ENCODE measurements at regions of chr14 and their contacts with region 1.

Region 1: GRCh38 chr14:23006544-23007419 is 3.2 kb downstream of the C14orf93 start:
- DNase-seq: peak; percentile 89 to 92
- H3K4me3 ChIP-seq: peak overlapping the region; percentile 73 to 85 (median 76)
- H3K27ac ChIP-seq: peak overlapping the region; percentile 89
- H3K4me1 ChIP-seq: peaks cover 4 to 7% (median 6%) of the 10 kb centered on the region in 4 experiments; a peak in 4 of 7 replicates
- H3K27me3 ChIP-seq: no peaks in the 10 kb centered on the region
- CTCF ChIP-seq: peak in 1 of 3 experiments; percentile 27; a peak in 2 of 4 replicates
- EP300 ChIP-seq: no peak
- POLR2A ChIP-seq: peak; percentile 74 to 99
- RAD21 ChIP-seq: no peak

Region 2: DNA sequence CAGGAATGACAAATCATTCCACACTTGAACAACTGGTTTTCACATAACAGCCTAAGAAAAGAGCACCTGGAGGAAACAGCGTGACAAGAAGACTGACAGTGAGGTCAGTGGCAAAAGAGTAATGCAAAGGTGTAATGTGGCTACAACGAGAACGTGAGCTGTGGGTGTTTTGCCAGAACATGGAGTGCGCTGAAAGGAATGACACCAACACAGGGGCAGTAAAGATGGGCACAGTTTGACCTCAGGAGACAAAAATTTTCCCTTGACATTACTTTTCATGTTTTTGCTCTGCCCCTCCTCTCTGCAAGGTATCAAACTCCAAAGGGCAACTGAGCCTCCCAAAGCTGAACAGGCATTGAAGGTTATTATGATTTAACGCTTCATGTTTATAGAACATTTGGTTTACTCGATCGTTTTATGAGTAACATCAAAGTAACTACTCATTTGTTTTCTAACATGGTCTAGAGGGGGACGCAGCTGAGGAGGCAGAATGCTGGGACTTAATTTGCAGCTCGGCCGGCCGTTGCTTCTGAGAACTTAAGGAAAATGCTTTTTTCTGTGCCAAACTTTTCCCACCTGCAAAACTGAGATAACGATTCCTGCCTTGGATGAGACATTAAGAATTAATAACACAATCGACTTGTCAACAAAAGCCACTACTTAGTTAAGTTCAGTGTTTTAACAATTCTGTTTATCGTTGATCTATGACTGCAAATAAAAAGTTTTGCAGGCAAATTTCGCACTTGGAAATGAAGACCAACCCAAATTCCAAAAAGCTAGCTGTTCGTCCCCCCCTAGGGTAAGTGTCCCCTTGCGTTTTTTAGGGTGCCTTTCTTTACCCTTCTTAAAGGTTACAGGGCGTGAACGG is 50.8 kb before region 1 on chr14:
- CTCF ChIA-PET with region 1: interaction called, 6 read pairs
- POLR2A ChIA-PET with region 1: interaction called, 12 read pairs
- DNase-seq: no peak
- H3K4me3 ChIP-seq: peak overlapping the region; percentile 71 to 88 (median 84)
- H3K27ac ChIP-seq: 0 out of 2 replicates have a peak overlapping the region, but pooled peaks have one; percentile 89
- H3K4me1 ChIP-seq: peaks cover 2 to 4% (median 2%) of the 10 kb centered on the region in 4 experiments; a peak in 5 of 7 replicates
- H3K27me3 ChIP-seq: no peaks in the 10 kb centered on the region
- CTCF ChIP-seq: no peak
- EP300 ChIP-seq: no peak
- POLR2A ChIP-seq: no peak
- RAD21 ChIP-seq: no peak

Region 3: GRCh38 chr14:22973217-22974032 is 33.4 kb before region 1 on chr14:
- CTCF ChIA-PET with region 1: interaction called, 18 read pairs
- POLR2A ChIA-PET with region 1: interaction called, 133 read pairs
- DNase-seq: peak in 1 of 2 experiments; percentile 66
- H3K4me3 ChIP-seq: no peak overlapping the region
- H3K27ac ChIP-seq: no peak overlapping the region
- H3K4me1 ChIP-seq: peaks cover 13 to 20% (median 18%) of the 10 kb centered on the region in 4 experiments
- H3K27me3 ChIP-seq: no peaks in the 10 kb centered on the region
- CTCF ChIP-seq: peak in 2 of 3 experiments; percentile 75 to 76; a peak in 3 of 4 replicates
- EP300 ChIP-seq: no peak
- POLR2A ChIP-seq: no peak; a peak in 1 of 3 replicates
- RAD21 ChIP-seq: peak; percentile 84 to 88

Region 4: GRCh38 chr14:23025151-23025814 is 18.5 kb after region 1 on chr14:
- CTCF ChIA-PET with region 1: interaction called, 22 read pairs
- POLR2A ChIA-PET with region 1: interaction called, 99 read pairs
- DNase-seq: no peak
- H3K4me3 ChIP-seq: no peak overlapping the region
- H3K27ac ChIP-seq: no peak overlapping the region
- H3K4me1 ChIP-seq: peaks cover 0 to 3% (median under 1%) of the 10 kb centered on the region in 4 experiments; a peak in 1 of 7 replicates
- H3K27me3 ChIP-seq: no peaks in the 10 kb centered on the region
- CTCF ChIP-seq: no peak
- EP300 ChIP-seq: no peak
- POLR2A ChIP-seq: no peak
- RAD21 ChIP-seq: no peak

Region 5: GRCh38 chr14:23034483-23035302 is 27.9 kb after region 1 on chr14 and contains the start of gene PSMB5:
- CTCF ChIA-PET with region 1: interaction called, 785 read pairs
- POLR2A ChIA-PET with region 1: interaction called, 11 read pairs
- DNase-seq: peak; percentile 80 to 89
- H3K4me3 ChIP-seq: peak within 1 kb of the TSS; percentile 79 to 95 (median 88)
- H3K27ac ChIP-seq: peak within 1 kb of the TSS; percentile 98
- H3K4me1 ChIP-seq: peaks cover 0 to 3% (median 1%) of the 10 kb centered on the region in 4 experiments; a peak in 2 of 7 replicates
- H3K27me3 ChIP-seq: no peaks in the 10 kb centered on the region
- CTCF ChIP-seq: no peak
- EP300 ChIP-seq: no peak
- POLR2A ChIP-seq: peak; percentile 75 to 89
- RAD21 ChIP-seq: no peak
- total RNA-seq, gene PSMB5: 246 and 254 TPM in 2 replicates

Region 6: GRCh38 chr14:23041729-23042128 is 34.9 kb after region 1 on chr14:
- CTCF ChIA-PET with region 1: interaction called, 785 read pairs
- POLR2A ChIA-PET with region 1: interaction called, 8 read pairs
- DNase-seq: no peak
- H3K4me3 ChIP-seq: no peak overlapping the region
- H3K27ac ChIP-seq: no peak overlapping the region
- H3K4me1 ChIP-seq: 0 out of 7 replicates have a peak, but pooled peaks cover 0 to 5% (median 0%) of the 10 kb centered on the region in 4 experiments
- H3K27me3 ChIP-seq: no peaks in the 10 kb centered on the region
- CTCF ChIP-seq: no peak
- EP300 ChIP-seq: no peak
- POLR2A ChIP-seq: no peak
- RAD21 ChIP-seq: no peak

Region 7: GRCh38 chr14:23068476-23069412 is 62.0 kb after region 1 on chr14:
- CTCF ChIA-PET with region 1: interaction called, 785 read pairs
- POLR2A ChIA-PET with region 1: interaction called, 14 read pairs
- DNase-seq: peak; percentile 84 to 85
- H3K4me3 ChIP-seq: peak overlapping the region in 1 of 4 experiments; percentile 18; a peak in 1 of 8 replicates
- H3K27ac ChIP-seq: no peak overlapping the region
- H3K4me1 ChIP-seq: peaks cover 5 to 27% (median 15%) of the 10 kb centered on the region in 4 experiments; a peak in 6 of 7 replicates
- H3K27me3 ChIP-seq: no peaks in the 10 kb centered on the region
- CTCF ChIP-seq: peak; percentile 82 to 99 (median 99)
- EP300 ChIP-seq: no peak
- POLR2A ChIP-seq: no peak
- RAD21 ChIP-seq: peak; percentile 59 to 71

Measured in H1 (cell line).